Endothelial cell of umbilical vein (primary cell): ENCODE measurements at regions of chr5 and their contacts with region 1.

Region 1: GRCh38 chr5:130237721-130238120 is 333.5 kb downstream of the CHSY3 start:
- DNase-seq: peak; percentile 87
- H3K4me3 ChIP-seq: no peak overlapping the region
- H3K27ac ChIP-seq: peak overlapping the region; percentile 2
- H3K4me1 ChIP-seq: peaks cover 13% of the 10 kb centered on the region
- H3K27me3 ChIP-seq: no peaks in the 10 kb centered on the region
- CTCF ChIP-seq: no peak
- POLR2A ChIP-seq: no peak

Region 2: GRCh38 chr5:130171699-130172098 is 66.0 kb before region 1 on chr5:
- CTCF ChIA-PET with region 1: no interaction called
- POLR2A ChIA-PET with region 1: no interaction called
- dilution Hi-C with region 1: no loop called
- intact Hi-C with region 1: no loop called
- DNase-seq: peak; percentile 6
- H3K4me3 ChIP-seq: no peak overlapping the region
- H3K27ac ChIP-seq: no peak overlapping the region
- H3K4me1 ChIP-seq: no peaks in the 10 kb centered on the region
- H3K27me3 ChIP-seq: no peaks in the 10 kb centered on the region
- CTCF ChIP-seq: no peak
- POLR2A ChIP-seq: no peak

Region 3: DNA sequence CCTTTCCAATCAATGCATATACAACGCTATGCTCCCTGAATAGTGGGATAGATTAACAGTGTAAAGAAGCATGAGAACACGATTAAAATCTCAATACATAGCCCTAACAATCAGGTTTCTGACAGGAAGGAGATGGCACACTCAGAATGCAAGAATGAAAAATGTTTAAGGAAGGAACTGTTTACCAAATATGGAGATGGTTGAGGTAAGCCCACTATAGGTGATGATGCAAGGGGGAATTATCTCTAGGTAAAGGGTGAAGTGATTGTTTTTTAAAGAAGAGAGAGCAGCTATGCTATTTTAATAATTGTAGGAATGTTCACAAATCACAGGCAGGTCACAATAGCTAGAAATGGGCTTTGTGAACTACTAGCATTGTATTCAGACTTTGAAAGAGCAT is 31.0 kb before region 1 on chr5:
- CTCF ChIA-PET with region 1: no interaction called
- POLR2A ChIA-PET with region 1: no interaction called
- dilution Hi-C with region 1: no loop called
- intact Hi-C with region 1: no loop called
- DNase-seq: no peak
- H3K4me3 ChIP-seq: no peak overlapping the region
- H3K27ac ChIP-seq: no peak overlapping the region
- H3K4me1 ChIP-seq: no peaks in the 10 kb centered on the region
- H3K27me3 ChIP-seq: peaks cover 3% of the 10 kb centered on the region in 2 experiments
- CTCF ChIP-seq: no peak
- POLR2A ChIP-seq: no peak

Region 4: DNA sequence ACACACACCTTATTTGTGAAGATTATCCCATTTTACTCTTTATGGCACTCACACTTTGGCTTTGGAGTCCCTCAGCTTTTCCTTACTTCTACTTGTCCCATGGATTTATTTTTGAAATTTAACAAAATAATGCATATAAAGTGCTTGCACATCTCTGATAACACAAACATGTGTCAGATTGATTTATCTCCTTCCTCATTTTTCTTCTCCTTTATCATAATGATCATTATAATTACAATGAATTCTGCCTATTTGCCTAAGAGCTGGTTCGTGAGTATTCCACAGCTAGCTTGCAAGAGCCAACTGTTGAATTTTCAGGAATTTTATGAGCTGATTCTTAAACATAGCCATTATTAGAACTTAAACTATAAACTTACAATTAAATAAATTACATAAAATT is 14.2 kb after region 1 on chr5:
- CTCF ChIA-PET with region 1: interaction called, 12 read pairs
- POLR2A ChIA-PET with region 1: no interaction called
- dilution Hi-C with region 1: no loop called
- intact Hi-C with region 1: no loop called
- DNase-seq: no peak
- H3K4me3 ChIP-seq: no peak overlapping the region
- H3K27ac ChIP-seq: no peak overlapping the region
- H3K4me1 ChIP-seq: no peaks in the 10 kb centered on the region
- H3K27me3 ChIP-seq: no peaks in the 10 kb centered on the region
- CTCF ChIP-seq: no peak
- POLR2A ChIP-seq: no peak

Region 5: GRCh38 chr5:130323804-130324454 is 86.2 kb after region 1 on chr5:
- CTCF ChIA-PET with region 1: no interaction called
- POLR2A ChIA-PET with region 1: no interaction called
- dilution Hi-C with region 1: no loop called
- intact Hi-C with region 1: loop called (anchors 1 kb)
- DNase-seq: peak; percentile 84
- H3K4me3 ChIP-seq: no peak overlapping the region
- H3K27ac ChIP-seq: peak overlapping the region; percentile 86
- H3K4me1 ChIP-seq: peaks cover 12% of the 10 kb centered on the region
- H3K27me3 ChIP-seq: no peaks in the 10 kb centered on the region
- CTCF ChIP-seq: no peak
- POLR2A ChIP-seq: no peak

Region 6: GRCh38 chr5:130337179-130337888 is 99.6 kb after region 1 on chr5:
- CTCF ChIA-PET with region 1: no interaction called
- POLR2A ChIA-PET with region 1: no interaction called
- dilution Hi-C with region 1: no loop called
- intact Hi-C with region 1: loop called (anchors 1 kb)
- DNase-seq: peak; percentile 87
- H3K4me3 ChIP-seq: no peak overlapping the region
- H3K27ac ChIP-seq: peak overlapping the region; percentile 78
- H3K4me1 ChIP-seq: peaks cover 37% of the 10 kb centered on the region
- H3K27me3 ChIP-seq: no peaks in the 10 kb centered on the region
- CTCF ChIP-seq: no peak
- POLR2A ChIP-seq: no peak

Region 7: GRCh38 chr5:130549884-130550561 is 312.3 kb after region 1 on chr5:
- CTCF ChIA-PET with region 1: no interaction called
- POLR2A ChIA-PET with region 1: no interaction called
- dilution Hi-C with region 1: no loop called
- intact Hi-C with region 1: loop called (anchors 1 kb)
- DNase-seq: peak; percentile 73
- H3K4me3 ChIP-seq: no peak overlapping the region
- H3K27ac ChIP-seq: peak overlapping the region; percentile 63
- H3K4me1 ChIP-seq: peaks cover 12% of the 10 kb centered on the region
- H3K27me3 ChIP-seq: no peaks in the 10 kb centered on the region
- CTCF ChIP-seq: no peak
- POLR2A ChIP-seq: no peak

Region 8: GRCh38 chr5:130710596-130710995 is 472.9 kb after region 1 on chr5:
- CTCF ChIA-PET with region 1: no interaction called
- POLR2A ChIA-PET with region 1: no interaction called
- dilution Hi-C with region 1: no loop called
- intact Hi-C with region 1: loop called (anchors 5 kb)
- DNase-seq: peak; percentile 86
- H3K4me3 ChIP-seq: no peak overlapping the region
- H3K27ac ChIP-seq: peak overlapping the region; percentile 48
- H3K4me1 ChIP-seq: peaks cover 26% of the 10 kb centered on the region
- H3K27me3 ChIP-seq: no peaks in the 10 kb centered on the region
- CTCF ChIP-seq: no peak
- POLR2A ChIP-seq: no peak